Activated CD8-positive, alpha-beta T cell treated with anti-CD3 and anti-CD28 coated beads for 36 hours (primary cell): ENCODE measurements at regions of chr2 and their contacts with region 1.

Region 1: GRCh38 chr2:157497638-157498314 is 53.9 kb upstream of the CYTIP start:
- DNase-seq: peak; percentile 36
- ATAC-seq: peak; percentile 94
- H3K4me3 Mint-ChIP-seq: no peak overlapping the region
- H3K27ac Mint-ChIP-seq: no peak overlapping the region
- H3K4me1 Mint-ChIP-seq: peaks cover 28% of the 10 kb centered on the region
- H3K27me3 Mint-ChIP-seq: no peaks in the 10 kb centered on the region
- CTCF ChIP-seq: peak; percentile 86

Region 2: GRCh38 chr2:157486596-157487270 is 11.0 kb before region 1 on chr2:
- CTCF ChIA-PET with region 1: interaction called, 46 read pairs
- POLR2A ChIA-PET with region 1: no interaction called
- intact Hi-C with region 1: no loop called
- DNase-seq: no peak
- ATAC-seq: peak; percentile 53
- H3K4me3 Mint-ChIP-seq: peak overlapping the region; percentile 68
- H3K27ac Mint-ChIP-seq: peak overlapping the region; percentile 85
- H3K4me1 Mint-ChIP-seq: peaks cover 80% of the 10 kb centered on the region
- H3K27me3 Mint-ChIP-seq: no peaks in the 10 kb centered on the region
- CTCF ChIP-seq: no peak

Region 3: DNA sequence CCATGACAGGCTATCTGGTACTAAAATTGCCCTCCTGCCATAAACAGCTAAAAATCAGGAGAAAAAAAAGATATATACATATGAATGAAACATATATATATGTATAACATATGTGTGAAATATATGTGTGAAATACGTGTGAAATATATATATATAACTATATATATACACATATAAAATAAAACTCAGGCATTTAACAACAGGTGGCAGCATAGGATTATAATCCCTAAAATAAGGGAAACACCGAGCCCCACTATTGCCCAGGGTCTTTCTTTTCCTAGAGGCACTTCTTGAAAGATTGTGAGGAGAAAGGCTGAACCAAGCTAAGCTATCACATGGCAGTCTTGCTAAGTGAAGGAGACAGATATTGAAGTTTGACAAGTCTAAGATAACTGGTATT is 12.0 kb after region 1 on chr2:
- CTCF ChIA-PET with region 1: interaction called, 14 read pairs
- POLR2A ChIA-PET with region 1: no interaction called
- intact Hi-C with region 1: no loop called
- DNase-seq: no peak
- ATAC-seq: no peak
- H3K4me3 Mint-ChIP-seq: no peak overlapping the region
- H3K27ac Mint-ChIP-seq: no peak overlapping the region
- H3K4me1 Mint-ChIP-seq: peaks cover 4% of the 10 kb centered on the region
- H3K27me3 Mint-ChIP-seq: peaks cover 17% of the 10 kb centered on the region
- CTCF ChIP-seq: no peak

Region 4: DNA sequence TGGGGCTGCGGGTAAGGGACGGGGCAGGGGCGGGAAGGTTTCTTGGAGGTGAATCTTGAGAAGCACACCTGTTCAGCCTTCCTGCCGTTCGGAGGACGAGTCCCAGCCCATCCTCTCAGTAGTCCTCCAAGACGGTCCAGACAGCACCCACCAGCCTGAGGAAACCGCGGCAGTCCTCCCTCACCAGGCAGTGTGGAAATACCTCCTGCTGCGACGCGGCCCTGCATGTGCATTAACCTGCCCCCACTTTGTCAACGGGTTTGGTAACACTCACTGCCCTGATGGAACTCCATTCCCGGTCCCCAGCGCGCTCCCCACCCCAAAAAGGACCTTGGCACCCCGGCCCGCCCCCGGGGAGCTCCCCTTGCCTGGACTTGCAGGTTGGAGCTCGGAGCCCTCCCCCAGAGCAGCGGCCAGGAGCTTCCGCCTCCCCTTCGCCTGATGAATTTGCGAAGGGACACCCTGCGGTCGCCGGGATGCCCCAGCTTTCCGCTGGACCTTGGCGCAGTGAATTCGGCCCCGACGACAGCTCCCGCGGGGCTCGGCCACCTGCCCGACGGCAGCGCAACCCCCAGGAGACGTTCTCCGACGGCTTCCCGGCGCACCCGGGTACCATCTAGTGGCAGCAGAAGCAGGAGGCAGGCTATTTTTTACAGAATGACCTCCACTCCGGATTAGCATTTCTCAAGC is 99.4 kb after region 1 on chr2:
- CTCF ChIA-PET with region 1: interaction called, 33 read pairs
- POLR2A ChIA-PET with region 1: no interaction called
- intact Hi-C with region 1: loop called (anchors 5 kb)
- DNase-seq: peak; percentile 71
- ATAC-seq: peak; percentile 90
- H3K4me3 Mint-ChIP-seq: peak overlapping the region; percentile 55
- H3K27ac Mint-ChIP-seq: no peak overlapping the region
- H3K4me1 Mint-ChIP-seq: peaks cover 10% of the 10 kb centered on the region
- H3K27me3 Mint-ChIP-seq: peaks cover 11% of the 10 kb centered on the region
- CTCF ChIP-seq: peak; percentile 71

Region 5: GRCh38 chr2:157603198-157603597 is 105.4 kb after region 1 on chr2:
- CTCF ChIA-PET with region 1: interaction called, 33 read pairs
- POLR2A ChIA-PET with region 1: no interaction called
- intact Hi-C with region 1: no loop called
- DNase-seq: no peak
- ATAC-seq: no peak
- H3K4me3 Mint-ChIP-seq: no peak overlapping the region
- H3K27ac Mint-ChIP-seq: no peak overlapping the region
- H3K4me1 Mint-ChIP-seq: no peaks in the 10 kb centered on the region
- H3K27me3 Mint-ChIP-seq: peaks cover 2% of the 10 kb centered on the region
- CTCF ChIP-seq: no peak

Region 6: GRCh38 chr2:157751462-157752058 is 253.8 kb after region 1 on chr2:
- CTCF ChIA-PET with region 1: interaction called, 13 read pairs
- POLR2A ChIA-PET with region 1: no interaction called
- intact Hi-C with region 1: loop called (anchors 10 kb)
- DNase-seq: peak; percentile 65
- ATAC-seq: peak; percentile 74
- H3K4me3 Mint-ChIP-seq: no peak overlapping the region
- H3K27ac Mint-ChIP-seq: no peak overlapping the region
- H3K4me1 Mint-ChIP-seq: peaks cover 22% of the 10 kb centered on the region
- H3K27me3 Mint-ChIP-seq: no peaks in the 10 kb centered on the region
- CTCF ChIP-seq: peak; percentile 50